MCF 10A (cell line): ENCODE measurements at regions of chr11 and their contacts with region 1.

Region 1: GRCh38 chr11:102733232-102733875 is 8.6 kb upstream of the MMP8 start:
- DNase-seq: peak; percentile 82
- H3K4me3 Mint-ChIP-seq: no peak overlapping the region
- H3K27ac Mint-ChIP-seq: no peak overlapping the region
- H3K4me1 Mint-ChIP-seq: peaks cover 5% of the 10 kb centered on the region
- H3K27me3 Mint-ChIP-seq: no peaks in the 10 kb centered on the region
- CTCF ChIP-seq: peak; percentile 86

Region 2: GRCh38 chr11:102712137-102712536 is 21.2 kb before region 1 on chr11:
- CTCF ChIA-PET with region 1: interaction called, 13 read pairs
- POLR2A ChIA-PET with region 1: no interaction called
- intact Hi-C with region 1: no loop called
- DNase-seq: no peak
- H3K4me3 Mint-ChIP-seq: no peak overlapping the region
- H3K27ac Mint-ChIP-seq: no peak overlapping the region
- H3K4me1 Mint-ChIP-seq: peaks cover 6% of the 10 kb centered on the region
- H3K27me3 Mint-ChIP-seq: peaks cover 17% of the 10 kb centered on the region
- CTCF ChIP-seq: no peak

Region 3: GRCh38 chr11:102780491-102780918 is 47.2 kb after region 1 on chr11 and contains the start of gene MMP10:
- CTCF ChIA-PET with region 1: interaction called, 14 read pairs
- POLR2A ChIA-PET with region 1: no interaction called
- intact Hi-C with region 1: loop called (anchors 1 kb)
- DNase-seq: peak; percentile 65
- H3K4me3 Mint-ChIP-seq: no peak within 1 kb of the TSS
- H3K27ac Mint-ChIP-seq: no peak within 1 kb of the TSS
- H3K4me1 Mint-ChIP-seq: peaks cover 13% of the 10 kb centered on the region
- H3K27me3 Mint-ChIP-seq: no peaks in the 10 kb centered on the region
- CTCF ChIP-seq: peak; percentile 39
- total RNA-seq, gene MMP10: 0.29 and 0.75 TPM in 2 replicates

Region 4: GRCh38 chr11:102830008-102830727 is 96.8 kb after region 1 on chr11:
- CTCF ChIA-PET with region 1: no interaction called
- POLR2A ChIA-PET with region 1: no interaction called
- intact Hi-C with region 1: no loop called
- DNase-seq: no peak
- H3K4me3 Mint-ChIP-seq: no peak overlapping the region
- H3K27ac Mint-ChIP-seq: no peak overlapping the region
- H3K4me1 Mint-ChIP-seq: peaks cover 6% of the 10 kb centered on the region
- H3K27me3 Mint-ChIP-seq: no peaks in the 10 kb centered on the region
- CTCF ChIP-seq: no peak

Region 5: DNA sequence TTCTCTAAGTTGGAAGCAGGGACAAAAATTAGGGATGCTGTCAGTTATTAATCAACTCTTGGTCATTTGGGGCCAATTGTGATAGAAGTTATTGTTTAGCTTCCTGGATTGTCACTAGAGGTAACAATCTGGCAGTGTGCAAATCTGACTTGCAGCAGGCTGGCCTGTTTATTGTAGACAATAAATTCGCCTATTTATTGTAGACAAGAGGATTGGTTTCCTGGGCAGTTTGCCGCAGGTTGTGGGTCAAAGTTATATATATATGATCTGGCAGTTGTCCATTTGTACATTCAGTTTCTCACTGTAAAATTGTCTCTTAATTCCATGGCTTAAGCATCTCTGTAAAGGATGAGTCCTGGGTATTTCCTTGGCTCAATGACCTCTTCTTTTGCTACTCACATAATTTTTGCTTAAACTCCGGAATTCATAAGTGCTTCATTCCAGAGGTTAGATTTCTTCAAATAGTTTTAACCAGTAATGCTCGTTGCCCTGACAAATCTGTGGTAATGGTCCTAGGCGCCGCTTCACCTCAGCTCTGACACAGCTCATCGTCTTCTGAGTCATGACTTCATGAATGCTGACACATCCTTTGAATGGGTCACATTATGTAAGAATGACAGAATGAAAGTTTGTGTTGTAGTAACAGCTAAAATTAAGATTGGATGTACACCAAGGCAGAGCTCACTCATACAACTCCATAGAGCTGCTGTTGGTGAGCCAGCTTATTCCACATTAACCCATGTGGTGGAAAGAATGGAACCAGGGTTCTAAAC is 117.8 kb after region 1 on chr11:
- CTCF ChIA-PET with region 1: no interaction called
- POLR2A ChIA-PET with region 1: no interaction called
- intact Hi-C with region 1: no loop called
- DNase-seq: peak; percentile 81
- H3K4me3 Mint-ChIP-seq: no peak overlapping the region
- H3K27ac Mint-ChIP-seq: no peak overlapping the region
- H3K4me1 Mint-ChIP-seq: peaks cover 44% of the 10 kb centered on the region
- H3K27me3 Mint-ChIP-seq: no peaks in the 10 kb centered on the region
- CTCF ChIP-seq: no peak

Region 6: GRCh38 chr11:102935514-102935913 is 202.2 kb after region 1 on chr11:
- CTCF ChIA-PET with region 1: interaction called, 73 read pairs
- POLR2A ChIA-PET with region 1: interaction called, 3 read pairs
- intact Hi-C with region 1: no loop called
- DNase-seq: no peak
- H3K4me3 Mint-ChIP-seq: no peak overlapping the region
- H3K27ac Mint-ChIP-seq: no peak overlapping the region
- H3K4me1 Mint-ChIP-seq: no peaks in the 10 kb centered on the region
- H3K27me3 Mint-ChIP-seq: no peaks in the 10 kb centered on the region
- CTCF ChIP-seq: no peak

Region 7: GRCh38 chr11:102946237-102946636 is 212.9 kb after region 1 on chr11:
- CTCF ChIA-PET with region 1: interaction called, 73 read pairs
- POLR2A ChIA-PET with region 1: no interaction called
- intact Hi-C with region 1: loop called (anchors 1 kb)
- DNase-seq: no peak
- H3K4me3 Mint-ChIP-seq: no peak overlapping the region
- H3K27ac Mint-ChIP-seq: no peak overlapping the region
- H3K4me1 Mint-ChIP-seq: peaks cover 10% of the 10 kb centered on the region
- H3K27me3 Mint-ChIP-seq: no peaks in the 10 kb centered on the region
- CTCF ChIP-seq: no peak